Left ventricle myocardium inferior (tissue), 1 donor: ENCODE measurements at regions of chr2 and their contacts with region 1.

Region 1: GRCh38 chr2:224357098-224357901 is 44.6 kb downstream of the FAM124B start:
- DNase-seq: no peak
- H3K4me3 ChIP-seq: no peak overlapping the region
- H3K27ac ChIP-seq: no peak overlapping the region
- H3K4me1 ChIP-seq: no peaks in the 10 kb centered on the region
- H3K27me3 ChIP-seq: peaks cover 11% of the 10 kb centered on the region
- CTCF ChIP-seq: peak; percentile 86

Region 2: DNA sequence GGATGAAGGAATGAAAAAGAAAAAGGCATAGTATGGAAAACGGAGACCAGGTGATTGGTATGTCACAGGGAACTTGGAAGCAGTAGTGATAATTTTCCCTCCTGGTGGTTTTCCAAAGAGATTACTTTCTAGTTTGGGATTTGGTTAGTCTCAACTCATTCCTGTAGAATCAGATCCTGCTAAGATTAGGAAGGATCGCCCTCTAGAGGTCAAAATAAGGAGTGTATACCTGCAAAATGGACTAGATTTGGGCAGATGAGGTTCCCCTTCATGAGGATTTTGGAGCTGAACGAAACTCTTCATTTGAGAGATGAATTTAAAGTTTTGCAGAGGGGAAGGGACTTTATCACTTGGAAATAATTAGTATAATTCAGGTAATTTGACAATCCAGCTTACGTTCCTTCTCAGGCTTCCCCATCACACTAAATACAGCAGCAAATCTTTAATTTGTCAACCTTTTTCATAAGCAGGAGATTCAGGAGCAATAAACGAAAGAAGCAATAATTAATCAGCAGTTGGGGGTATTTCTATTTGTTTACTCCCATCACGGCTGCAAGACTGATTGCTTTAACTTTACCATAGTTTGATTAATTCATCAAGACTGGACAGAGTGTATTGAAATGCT is 293.6 kb after region 1 on chr2:
- intact Hi-C with region 1: loop called (anchors 2 kb)
- DNase-seq: no peak
- H3K4me3 ChIP-seq: no peak overlapping the region
- H3K27ac ChIP-seq: no peak overlapping the region
- H3K4me1 ChIP-seq: no peaks in the 10 kb centered on the region
- H3K27me3 ChIP-seq: peaks cover 20% of the 10 kb centered on the region
- CTCF ChIP-seq: peak; percentile 89

Region 3: DNA sequence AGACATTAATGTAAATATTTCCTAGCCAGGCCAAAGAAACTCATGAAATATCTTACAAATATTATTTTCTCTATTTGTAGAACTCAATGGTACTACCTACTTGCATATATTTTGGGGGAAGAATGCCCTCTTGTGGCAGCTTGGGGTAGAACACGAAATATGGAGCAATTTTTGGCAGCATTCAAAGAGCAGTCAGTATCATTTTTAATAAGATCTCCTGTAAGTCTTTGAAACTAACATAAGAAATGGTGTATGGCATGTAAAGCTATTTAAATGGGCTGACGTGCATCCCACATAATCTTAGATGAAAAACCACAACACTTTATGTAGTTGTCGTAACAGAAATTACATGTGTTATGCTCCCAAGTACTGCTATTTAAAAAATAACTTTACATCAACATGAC is 421.2 kb after region 1 on chr2:
- intact Hi-C with region 1: loop called (anchors 10 kb)
- DNase-seq: no peak
- H3K4me3 ChIP-seq: no peak overlapping the region
- H3K27ac ChIP-seq: no peak overlapping the region
- H3K4me1 ChIP-seq: no peaks in the 10 kb centered on the region
- H3K27me3 ChIP-seq: peaks cover 18% of the 10 kb centered on the region
- CTCF ChIP-seq: peak; percentile 80